Posterior vena cava (tissue), 2 donors: ENCODE measurements at regions of chr6 and their contacts with region 1.

Region 1: GRCh38 chr6:12203001-12203400 is 87.2 kb upstream of the EDN1 start:
- DNase-seq: no peak

Region 2: GRCh38 chr6:12875051-12875450 is 672.0 kb after region 1 on chr6:
- intact Hi-C with region 1: loop called in 1 of 2 experiments (anchors 5 kb)
- DNase-seq: no peak